SK-N-SH (cell line): ENCODE measurements at regions of chr10 and their contacts with region 1.

Region 1: GRCh38 chr10:24556750-24557742 is 166.6 kb downstream of the ARHGAP21 start:
- DNase-seq: peak; percentile 47
- H3K4me3 ChIP-seq: no peak overlapping the region
- H3K27ac ChIP-seq: no peak overlapping the region
- H3K4me1 ChIP-seq: 0 out of 4 replicates have a peak, but pooled peaks cover 0 to 4% of the 10 kb centered on the region in 2 experiments
- H3K27me3 ChIP-seq: no peaks in the 10 kb centered on the region
- CTCF ChIP-seq: peak; percentile 80
- EP300 ChIP-seq: no peak
- RAD21 ChIP-seq: peak; percentile 69

Region 2: DNA sequence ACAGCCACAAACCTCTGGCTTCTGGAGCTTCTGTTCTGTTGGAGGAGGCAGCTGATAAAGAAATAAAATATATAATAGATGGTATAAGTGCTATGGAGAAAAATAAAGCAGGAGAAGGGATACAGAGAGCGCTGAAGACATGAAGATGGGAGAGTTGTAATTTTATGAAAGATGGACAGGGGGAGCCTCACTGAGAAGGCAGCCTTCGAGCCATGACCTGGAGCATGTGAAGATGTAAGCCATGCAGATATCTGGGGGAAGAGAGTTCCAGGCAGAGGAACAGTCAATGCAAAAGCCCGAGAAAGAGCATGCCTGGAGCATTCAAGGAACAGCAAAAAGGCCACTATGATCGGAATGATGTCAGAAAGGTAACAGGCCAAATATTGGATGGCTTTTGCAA is 160.6 kb before region 1 on chr10:
- CTCF ChIA-PET with region 1: no interaction called
- POLR2A ChIA-PET with region 1: no interaction called
- DNase-seq: no peak
- H3K4me3 ChIP-seq: no peak overlapping the region
- H3K27ac ChIP-seq: no peak overlapping the region
- H3K4me1 ChIP-seq: peaks cover 5 to 8% of the 10 kb centered on the region in 2 experiments; a peak in 3 of 4 replicates
- H3K27me3 ChIP-seq: no peaks in the 10 kb centered on the region
- CTCF ChIP-seq: peak; percentile 36
- EP300 ChIP-seq: no peak
- RAD21 ChIP-seq: peak; percentile 27; the same call in 1 of the 2 replicates

Region 3: GRCh38 chr10:24503461-24504320 is 53.4 kb before region 1 on chr10:
- CTCF ChIA-PET with region 1: interaction called, 10 read pairs
- POLR2A ChIA-PET with region 1: no interaction called
- DNase-seq: peak; percentile 63
- H3K4me3 ChIP-seq: no peak overlapping the region; a peak in 1 of 4 replicates
- H3K27ac ChIP-seq: no peak overlapping the region
- H3K4me1 ChIP-seq: peaks cover 0 to 4% of the 10 kb centered on the region in 2 experiments; a peak in 2 of 4 replicates
- H3K27me3 ChIP-seq: no peaks in the 10 kb centered on the region
- CTCF ChIP-seq: peak; percentile 85
- EP300 ChIP-seq: no peak
- RAD21 ChIP-seq: peak; percentile 88

Region 4: DNA sequence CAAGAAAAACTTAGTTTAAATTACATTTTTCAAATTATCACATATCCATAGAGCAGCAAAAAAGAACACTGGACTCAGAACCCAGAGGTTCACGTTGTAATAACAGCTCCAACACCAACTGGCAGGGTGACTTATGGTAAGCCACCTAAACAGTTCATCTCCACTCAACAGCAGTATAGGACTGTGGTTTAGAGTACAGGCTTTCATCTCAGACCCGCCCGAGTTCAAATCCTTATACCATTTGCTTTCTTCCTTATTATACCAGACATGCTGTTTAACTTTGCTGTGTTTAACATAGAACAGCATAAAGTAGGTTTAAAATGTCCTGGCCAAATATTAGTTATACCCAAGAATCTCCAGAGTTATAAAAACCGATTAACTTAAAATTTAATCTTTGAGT is 68.7 kb after region 1 on chr10:
- CTCF ChIA-PET with region 1: no interaction called
- POLR2A ChIA-PET with region 1: no interaction called
- DNase-seq: no peak
- H3K4me3 ChIP-seq: no peak overlapping the region
- H3K27ac ChIP-seq: no peak overlapping the region
- H3K4me1 ChIP-seq: peaks cover 0 to 8% of the 10 kb centered on the region in 2 experiments; a peak in 2 of 4 replicates
- H3K27me3 ChIP-seq: no peaks in the 10 kb centered on the region
- CTCF ChIP-seq: no peak
- EP300 ChIP-seq: no peak
- RAD21 ChIP-seq: no peak

Region 5: GRCh38 chr10:25117757-25118156 is 560.7 kb after region 1 on chr10:
- CTCF ChIA-PET with region 1: no interaction called
- POLR2A ChIA-PET with region 1: no interaction called
- DNase-seq: no peak
- H3K4me3 ChIP-seq: no peak overlapping the region
- H3K27ac ChIP-seq: no peak overlapping the region
- H3K4me1 ChIP-seq: no peaks in the 10 kb centered on the region; a peak in 1 of 4 replicates
- H3K27me3 ChIP-seq: no peaks in the 10 kb centered on the region; the same call in 1 of the 2 replicates
- CTCF ChIP-seq: no peak
- EP300 ChIP-seq: no peak
- RAD21 ChIP-seq: no peak